ENCODE measurements at regions of chr9 and their contacts with region 1.

Region 1: DNA sequence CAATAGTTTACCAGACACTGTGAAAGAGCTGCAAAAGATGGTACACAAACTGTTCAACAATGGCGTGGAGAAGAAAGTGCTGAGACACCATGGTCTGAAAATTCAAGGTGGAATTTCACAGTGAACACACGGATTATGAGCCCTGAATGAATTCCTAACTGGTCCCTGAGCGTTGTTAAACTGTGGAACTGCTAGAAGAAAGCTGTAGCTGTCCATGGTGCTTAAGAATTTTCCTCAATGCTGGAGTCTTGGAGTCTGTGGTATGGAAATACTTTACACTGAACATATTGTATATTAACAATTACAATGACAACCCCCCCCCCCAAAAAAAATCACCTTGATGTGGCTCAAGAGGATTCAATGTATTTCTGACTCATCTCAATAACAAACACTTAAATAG is 68.5 kb downstream of the SLC24A2 start:
- DNase-seq: no peak
- ATAC-seq: no peak
- H3K4me3 ChIP-seq: no peak overlapping the region
- H3K27ac ChIP-seq: no peak overlapping the region
- H3K4me1 ChIP-seq: no peaks in the 10 kb centered on the region
- H3K27me3 ChIP-seq: no peaks in the 10 kb centered on the region
- CTCF ChIP-seq: no peak

Region 2: GRCh38 chr9:19239955-19240354 is 480.4 kb before region 1 on chr9:
- intact Hi-C with region 1: no loop called
- DNase-seq: no peak
- ATAC-seq: no peak
- H3K4me3 ChIP-seq: no peak overlapping the region
- H3K27ac ChIP-seq: no peak overlapping the region
- H3K4me1 ChIP-seq: peaks cover 7% of the 10 kb centered on the region
- H3K27me3 ChIP-seq: no peaks in the 10 kb centered on the region
- CTCF ChIP-seq: no peak

Region 3: GRCh38 chr9:19677924-19678323 is 42.5 kb before region 1 on chr9:
- intact Hi-C with region 1: no loop called
- DNase-seq: no peak
- ATAC-seq: no peak
- H3K4me3 ChIP-seq: no peak overlapping the region
- H3K27ac ChIP-seq: no peak overlapping the region
- H3K4me1 ChIP-seq: no peaks in the 10 kb centered on the region
- H3K27me3 ChIP-seq: no peaks in the 10 kb centered on the region
- CTCF ChIP-seq: no peak

Region 4: GRCh38 chr9:19799784-19800183 is 79.4 kb after region 1 on chr9:
- intact Hi-C with region 1: no loop called
- DNase-seq: no peak
- ATAC-seq: no peak
- H3K4me3 ChIP-seq: no peak overlapping the region
- H3K27ac ChIP-seq: no peak overlapping the region
- H3K4me1 ChIP-seq: no peaks in the 10 kb centered on the region
- H3K27me3 ChIP-seq: no peaks in the 10 kb centered on the region
- CTCF ChIP-seq: no peak

Region 5: DNA sequence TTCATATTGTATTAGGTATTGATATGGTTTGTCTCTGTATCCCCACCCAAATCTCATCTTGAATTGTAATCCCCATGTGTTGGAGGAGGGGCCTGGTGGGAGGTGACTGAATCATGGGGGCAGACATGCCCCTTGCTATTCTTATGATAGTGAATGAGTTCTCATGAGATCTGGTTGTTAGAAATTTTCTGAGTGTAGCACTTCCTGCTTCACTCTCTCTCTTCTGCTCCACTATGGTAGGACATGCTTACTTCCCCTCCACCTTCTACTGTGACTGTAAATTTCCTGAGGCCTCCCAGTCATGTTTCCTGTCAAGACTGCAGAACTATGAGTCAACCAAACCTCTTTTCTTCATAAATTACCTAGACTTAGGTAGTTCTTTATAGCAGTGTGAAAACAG is 255.8 kb after region 1 on chr9:
- intact Hi-C with region 1: no loop called
- DNase-seq: no peak
- ATAC-seq: no peak
- H3K4me3 ChIP-seq: no peak overlapping the region
- H3K27ac ChIP-seq: no peak overlapping the region
- H3K4me1 ChIP-seq: no peaks in the 10 kb centered on the region
- H3K27me3 ChIP-seq: no peaks in the 10 kb centered on the region
- CTCF ChIP-seq: no peak

Region 6: DNA sequence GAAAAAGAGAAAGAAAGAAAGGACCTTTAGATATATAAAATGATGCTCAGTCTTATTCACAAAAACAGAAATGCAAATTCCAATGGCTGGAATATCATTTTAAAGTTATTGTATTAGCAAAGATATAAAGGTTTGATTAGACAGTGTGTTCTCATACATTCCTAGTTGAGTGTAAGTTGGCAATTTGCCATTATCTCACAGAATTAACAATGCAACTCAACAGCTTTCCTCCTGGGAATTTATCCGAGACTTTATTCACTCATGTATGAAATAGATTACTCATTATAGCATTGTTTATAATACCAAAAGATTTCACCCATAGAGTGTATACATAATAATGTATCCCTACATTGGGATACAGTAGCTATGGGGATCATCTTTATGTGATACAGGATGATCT is 929.0 kb after region 1 on chr9:
- intact Hi-C with region 1: loop called in 1 of 2 experiments (anchors 5 kb)
- DNase-seq: no peak
- ATAC-seq: no peak
- H3K4me3 ChIP-seq: no peak overlapping the region
- H3K27ac ChIP-seq: no peak overlapping the region
- H3K4me1 ChIP-seq: no peaks in the 10 kb centered on the region
- H3K27me3 ChIP-seq: no peaks in the 10 kb centered on the region
- CTCF ChIP-seq: no peak